Activated CD4-positive, alpha-beta T cell treated with anti-CD3 and anti-CD28 coated beads for 36 hours (primary cell): ENCODE measurements at regions of chr1 and their contacts with region 1.

Region 1: GRCh38 chr1:23559136-23559984 is at the start of gene ID3:
- DNase-seq: peak; percentile 96
- ATAC-seq: peak; percentile 71
- H3K4me3 Mint-ChIP-seq: peak within 1 kb of the TSS; percentile 94
- H3K27ac Mint-ChIP-seq: peak within 1 kb of the TSS; percentile 79
- H3K4me1 Mint-ChIP-seq: peaks cover 58% of the 10 kb centered on the region
- H3K27me3 Mint-ChIP-seq: peaks cover 5% of the 10 kb centered on the region
- total RNA-seq, gene ID3: 42.6 to 43.9 TPM

Region 2: GRCh38 chr1:23177438-23178380 is 381.7 kb before region 1 on chr1:
- CTCF ChIA-PET with region 1: no interaction called
- POLR2A ChIA-PET with region 1: no interaction called
- intact Hi-C with region 1: no loop called
- DNase-seq: peak; percentile 74
- ATAC-seq: peak; percentile 80
- H3K4me3 Mint-ChIP-seq: peak overlapping the region; percentile 54
- H3K27ac Mint-ChIP-seq: no peak overlapping the region
- H3K4me1 Mint-ChIP-seq: peaks cover 12% of the 10 kb centered on the region
- H3K27me3 Mint-ChIP-seq: peaks cover 19% of the 10 kb centered on the region

Region 3: DNA sequence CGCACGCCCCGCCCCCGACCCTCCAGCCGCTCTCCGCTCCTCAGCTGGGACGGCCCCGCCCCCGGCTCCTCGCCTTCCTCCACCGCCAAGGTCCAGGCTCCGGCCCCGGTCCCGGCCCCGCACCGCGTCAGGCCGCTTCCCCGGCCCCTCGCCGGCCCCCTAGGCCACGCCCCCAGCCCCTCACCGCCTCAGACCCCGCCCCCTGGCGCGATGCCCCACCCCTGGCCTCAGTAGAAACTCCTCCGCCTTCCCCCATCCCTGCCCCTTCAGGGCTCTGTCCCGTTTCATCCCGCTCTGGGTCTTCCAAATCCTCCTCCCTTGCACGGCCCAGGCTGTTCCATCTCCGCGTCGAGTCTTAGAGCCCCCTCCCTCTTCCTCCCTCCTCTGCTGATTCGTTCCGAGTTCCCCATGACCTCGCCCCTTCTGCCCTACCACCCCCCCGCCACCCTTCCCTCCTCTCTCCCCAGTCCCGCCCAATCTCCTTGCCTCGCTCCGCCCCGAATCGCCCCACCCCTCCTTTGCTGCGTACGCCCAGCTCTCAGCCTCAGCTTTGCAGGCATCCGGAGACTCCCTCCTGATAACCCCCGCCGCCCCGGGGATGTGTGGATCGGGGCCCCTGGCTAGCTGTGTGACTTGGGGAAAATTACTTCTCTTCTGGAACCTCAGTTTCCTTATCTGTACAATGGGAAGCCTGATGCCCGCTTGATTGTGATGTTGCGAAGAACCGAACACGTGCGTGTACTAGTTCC is 74.9 kb before region 1 on chr1:
- CTCF ChIA-PET with region 1: no interaction called
- POLR2A ChIA-PET with region 1: no interaction called
- intact Hi-C with region 1: loop called in 1 of 2 experiments (anchors 1 kb)
- DNase-seq: peak; percentile 95
- ATAC-seq: peak; percentile 94
- H3K4me3 Mint-ChIP-seq: peak overlapping the region; percentile 79
- H3K27ac Mint-ChIP-seq: peak overlapping the region; percentile 33
- H3K4me1 Mint-ChIP-seq: peaks cover 20% of the 10 kb centered on the region
- H3K27me3 Mint-ChIP-seq: peaks cover 18% of the 10 kb centered on the region

Region 4: DNA sequence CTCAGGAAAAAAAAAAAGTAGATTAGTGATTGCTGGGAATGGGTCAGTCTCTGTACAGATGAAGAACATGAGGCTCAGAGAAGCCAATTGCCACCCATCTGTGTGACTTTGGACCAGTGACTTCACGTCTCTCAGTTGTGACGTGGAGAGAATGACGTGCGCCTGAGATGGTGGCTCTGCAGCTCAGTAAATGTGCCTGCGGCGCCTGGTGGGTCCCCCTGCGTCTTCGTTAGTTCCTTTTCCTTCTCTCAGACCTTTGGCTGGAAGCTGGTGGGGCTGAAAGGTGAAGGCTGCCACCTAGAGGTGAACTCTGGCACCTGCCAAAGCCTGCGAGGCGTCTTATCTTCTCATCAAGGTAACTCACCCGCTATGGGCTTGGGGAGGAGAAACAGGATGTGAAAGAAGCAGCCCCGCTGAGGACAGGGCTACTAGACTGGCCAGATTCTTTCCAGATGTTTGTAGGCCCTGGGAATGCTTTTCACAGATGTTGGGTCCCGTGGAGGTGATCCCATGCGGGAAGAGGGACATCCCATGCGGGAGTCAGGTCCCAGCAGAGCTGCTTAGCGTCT is 19.6 kb before region 1 on chr1:
- CTCF ChIA-PET with region 1: interaction called, 23 read pairs
- POLR2A ChIA-PET with region 1: no interaction called
- intact Hi-C with region 1: no loop called
- DNase-seq: peak; percentile 95
- ATAC-seq: peak; percentile 95
- H3K4me3 Mint-ChIP-seq: peak overlapping the region; percentile 18
- H3K27ac Mint-ChIP-seq: peak overlapping the region; percentile 61
- H3K4me1 Mint-ChIP-seq: peaks cover 13% of the 10 kb centered on the region
- H3K27me3 Mint-ChIP-seq: no peaks in the 10 kb centered on the region

Region 5: GRCh38 chr1:23591460-23592208 is 32.3 kb after region 1 on chr1:
- CTCF ChIA-PET with region 1: interaction called, 4 read pairs
- POLR2A ChIA-PET with region 1: interaction called, 4 read pairs
- intact Hi-C with region 1: loop called (anchors 2 to 5 kb)
- DNase-seq: peak; percentile 84
- ATAC-seq: peak; percentile 85
- H3K4me3 Mint-ChIP-seq: peak overlapping the region; percentile 32
- H3K27ac Mint-ChIP-seq: peak overlapping the region; percentile 96
- H3K4me1 Mint-ChIP-seq: peaks cover 65% of the 10 kb centered on the region
- H3K27me3 Mint-ChIP-seq: no peaks in the 10 kb centered on the region

Region 6: DNA sequence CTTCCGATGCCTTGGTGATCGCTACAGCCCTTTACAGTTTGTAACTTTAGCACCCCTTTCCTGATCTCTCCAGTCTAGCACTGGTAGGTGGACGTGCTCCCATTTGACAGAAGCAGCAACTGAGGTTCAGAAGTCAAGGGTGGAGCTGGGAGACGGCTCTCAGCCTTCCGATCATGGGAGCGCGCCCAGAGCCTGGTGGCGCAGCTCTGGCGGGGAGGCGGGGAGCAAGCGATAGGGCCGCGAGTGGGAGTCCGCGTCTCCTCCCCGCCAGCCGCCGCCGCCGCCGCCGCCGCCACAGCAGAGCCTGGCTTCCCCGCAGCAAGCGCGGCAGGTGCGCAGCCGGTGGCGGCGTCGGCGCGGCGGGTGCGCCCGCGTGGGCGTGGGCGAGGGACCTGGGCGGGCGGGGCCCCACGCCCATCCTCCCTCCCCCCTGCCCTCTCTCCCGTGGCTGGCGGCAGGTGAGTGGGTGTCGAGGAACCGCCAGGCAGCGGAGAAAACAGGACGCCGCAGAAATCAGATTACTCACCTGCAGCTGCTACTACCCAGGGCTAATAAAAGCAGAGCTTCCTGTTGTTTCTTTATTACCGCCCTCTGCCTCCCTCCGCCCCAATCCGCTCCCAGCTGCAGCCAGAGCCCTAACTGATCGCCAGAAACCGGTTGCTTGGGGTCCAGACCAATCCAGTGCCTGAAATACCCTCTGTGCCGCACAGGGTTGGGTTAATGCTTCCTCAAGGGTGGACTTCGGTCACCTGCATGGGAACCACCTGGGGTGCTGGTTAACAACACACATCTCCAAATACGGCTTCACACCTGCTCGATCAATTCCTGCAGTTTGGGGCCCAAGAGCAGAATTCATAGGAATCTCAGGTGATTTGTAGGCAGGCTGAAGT is 60.2 kb after region 1 on chr1:
- CTCF ChIA-PET with region 1: interaction called, 15 read pairs
- POLR2A ChIA-PET with region 1: interaction called, 5 read pairs
- intact Hi-C with region 1: loop called (anchors 1 to 2 kb)
- DNase-seq: peak; percentile 90
- ATAC-seq: peak; percentile 68
- H3K4me3 Mint-ChIP-seq: peak overlapping the region; percentile 60
- H3K27ac Mint-ChIP-seq: peak overlapping the region; percentile 79
- H3K4me1 Mint-ChIP-seq: peaks cover 89% of the 10 kb centered on the region
- H3K27me3 Mint-ChIP-seq: no peaks in the 10 kb centered on the region